ENCODE measurements at regions of chr1 and their contacts with region 1.

Region 1: DNA sequence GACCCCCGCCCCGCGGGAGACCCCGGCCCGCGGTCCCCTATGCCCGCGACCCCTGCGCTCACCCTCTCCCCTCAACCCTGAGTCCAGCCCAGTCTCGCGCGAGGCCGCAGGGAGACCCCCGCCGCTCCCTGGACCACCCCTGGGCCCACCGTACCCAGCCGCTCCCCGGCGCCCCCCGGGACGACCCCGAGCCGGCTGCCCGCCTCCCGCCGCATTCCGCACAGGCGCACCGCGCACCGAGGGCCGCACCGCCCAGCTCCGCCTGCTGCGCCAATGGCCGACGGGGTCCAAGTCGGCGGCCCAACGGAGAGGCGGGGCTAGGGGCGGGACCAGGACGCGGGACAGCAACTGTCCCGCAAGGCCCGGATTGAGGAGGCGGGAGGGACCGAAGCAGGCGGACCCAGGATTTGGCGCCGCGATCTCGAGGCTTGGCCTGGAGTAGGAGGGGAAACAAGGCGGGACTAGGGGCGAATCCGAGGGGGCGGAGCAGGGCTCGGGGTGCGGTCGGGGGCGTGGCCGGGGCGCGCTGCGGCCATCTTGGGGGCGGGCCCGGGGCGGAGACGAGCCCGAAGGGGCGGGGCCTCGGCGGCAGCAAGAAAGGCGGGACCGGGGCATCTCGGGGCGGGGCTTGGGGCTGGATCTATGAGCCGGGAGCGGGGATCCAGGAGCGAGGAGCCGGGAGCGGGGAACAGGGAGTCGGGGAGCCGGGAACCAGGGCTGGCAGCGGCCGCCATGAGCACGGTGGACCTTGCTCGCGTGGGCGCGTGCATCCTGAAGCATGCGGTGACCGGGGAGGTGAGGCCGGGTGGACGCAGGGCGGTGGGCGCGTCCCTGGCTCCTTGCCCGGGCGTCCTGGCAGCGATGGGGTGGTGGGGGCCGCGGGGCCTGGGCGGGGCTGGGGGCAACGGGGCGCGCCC is at the start of gene PRXL2B:
- DNase-seq: peak; percentile 94 to 99 (median 97)
- ATAC-seq: peak; percentile 69
- H3K4me3 ChIP-seq: peak within 1 kb of the TSS; percentile 79 to 95
- H3K4me3 Mint-ChIP-seq: peak within 1 kb of the TSS; percentile 93
- H3K27ac ChIP-seq: peak within 1 kb of the TSS; percentile 95 to 98
- H3K27ac Mint-ChIP-seq: peak within 1 kb of the TSS; percentile 99
- H3K4me1 ChIP-seq: peaks cover 37% of the 10 kb centered on the region
- H3K4me1 Mint-ChIP-seq: peaks cover 40% of the 10 kb centered on the region
- H3K27me3 ChIP-seq: no peaks in the 10 kb centered on the region
- H3K27me3 Mint-ChIP-seq: no peaks in the 10 kb centered on the region
- CTCF ChIP-seq: no peak
- total RNA-seq, gene PRXL2B: 13.5 to 15.9 TPM

Region 2: DNA sequence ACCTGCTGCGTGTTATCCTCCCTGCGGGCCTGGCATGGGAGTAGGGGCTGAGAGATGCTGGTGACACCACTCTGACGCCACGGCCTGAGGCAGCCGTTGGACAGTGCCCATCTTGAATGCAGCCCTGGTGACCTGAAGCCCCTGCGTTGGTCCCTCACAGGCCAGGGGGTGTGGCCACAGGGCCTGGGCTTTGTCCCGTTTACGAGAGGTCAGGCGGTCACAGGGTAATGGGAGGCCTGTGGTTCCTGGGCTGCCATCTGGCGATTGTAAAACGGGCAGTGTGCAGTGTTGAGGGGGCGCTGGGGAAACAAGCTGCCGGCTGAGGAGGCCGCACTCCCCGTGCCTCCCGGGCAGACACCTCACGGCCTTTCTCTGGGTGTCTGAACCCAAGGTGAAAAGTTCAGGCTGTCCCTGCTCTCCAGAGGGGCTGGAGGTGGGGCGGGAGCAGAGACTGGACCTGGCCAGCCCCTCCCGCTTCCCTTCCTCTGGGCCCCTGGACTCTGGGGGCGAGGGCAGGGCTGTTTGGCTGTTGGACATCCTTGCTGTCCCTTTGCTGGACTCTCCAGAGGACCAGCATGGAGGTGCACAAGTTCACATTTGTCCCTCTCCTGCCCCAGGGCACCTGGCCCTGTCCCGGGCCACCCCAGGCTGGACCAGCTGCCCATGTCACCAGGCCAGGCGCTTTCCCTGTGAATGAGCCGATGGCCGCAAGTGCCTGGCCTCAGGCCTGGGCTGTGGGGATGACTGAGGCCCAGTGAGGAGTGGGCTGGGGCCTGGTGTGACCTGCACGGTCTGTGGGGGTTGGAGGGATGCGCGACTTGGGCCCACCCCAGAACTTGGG is 315.9 kb before region 1 on chr1:
- CTCF ChIA-PET with region 1: no interaction called
- POLR2A ChIA-PET with region 1: no interaction called
- intact Hi-C with region 1: no loop called
- DNase-seq: no peak
- ATAC-seq: no peak
- H3K4me3 ChIP-seq: no peak overlapping the region
- H3K4me3 Mint-ChIP-seq: no peak overlapping the region
- H3K27ac ChIP-seq: no peak overlapping the region
- H3K27ac Mint-ChIP-seq: no peak overlapping the region
- H3K4me1 ChIP-seq: peaks cover 92% of the 10 kb centered on the region
- H3K4me1 Mint-ChIP-seq: peaks cover 65% of the 10 kb centered on the region
- H3K27me3 ChIP-seq: no peaks in the 10 kb centered on the region
- H3K27me3 Mint-ChIP-seq: no peaks in the 10 kb centered on the region
- CTCF ChIP-seq: no peak

Region 3: GRCh38 chr1:2314803-2315673 is 271.4 kb before region 1 on chr1:
- CTCF ChIA-PET with region 1: no interaction called
- POLR2A ChIA-PET with region 1: no interaction called
- intact Hi-C with region 1: loop called in 1 of 2 experiments (anchors 10 kb)
- DNase-seq: peak; percentile 52 to 89 (median 73)
- ATAC-seq: peak; percentile 50
- H3K4me3 ChIP-seq: peak overlapping the region; percentile 52 to 58
- H3K4me3 Mint-ChIP-seq: peak overlapping the region; percentile 64
- H3K27ac ChIP-seq: peak overlapping the region; percentile 70 to 82
- H3K27ac Mint-ChIP-seq: peak overlapping the region; percentile 79
- H3K4me1 ChIP-seq: peaks cover 76% of the 10 kb centered on the region
- H3K4me1 Mint-ChIP-seq: peaks cover 33% of the 10 kb centered on the region
- H3K27me3 ChIP-seq: no peaks in the 10 kb centered on the region
- H3K27me3 Mint-ChIP-seq: no peaks in the 10 kb centered on the region
- CTCF ChIP-seq: peak; percentile 97

Region 4: GRCh38 chr1:2535981-2536380 is 50.4 kb before region 1 on chr1:
- CTCF ChIA-PET with region 1: no interaction called
- POLR2A ChIA-PET with region 1: no interaction called
- intact Hi-C with region 1: no loop called
- DNase-seq: no peak
- ATAC-seq: no peak
- H3K4me3 ChIP-seq: no peak overlapping the region
- H3K4me3 Mint-ChIP-seq: no peak overlapping the region
- H3K27ac ChIP-seq: no peak overlapping the region
- H3K27ac Mint-ChIP-seq: no peak overlapping the region
- H3K4me1 ChIP-seq: peaks cover 10% of the 10 kb centered on the region
- H3K4me1 Mint-ChIP-seq: peaks cover 3% of the 10 kb centered on the region
- H3K27me3 ChIP-seq: peaks cover under 1 to 17% of the 10 kb centered on the region in 2 experiments
- H3K27me3 Mint-ChIP-seq: peaks cover 8% of the 10 kb centered on the region
- CTCF ChIP-seq: no peak

Region 5: GRCh38 chr1:2561898-2562545 is 24.4 kb before region 1 on chr1:
- CTCF ChIA-PET with region 1: interaction called, 28 read pairs
- POLR2A ChIA-PET with region 1: interaction called, 98 read pairs
- intact Hi-C with region 1: no loop called
- DNase-seq: peak in 3 of 9 experiments; percentile 22 to 53 (median 40)
- ATAC-seq: peak; percentile 67
- H3K4me3 ChIP-seq: no peak overlapping the region
- H3K4me3 Mint-ChIP-seq: no peak overlapping the region
- H3K27ac ChIP-seq: no peak overlapping the region
- H3K27ac Mint-ChIP-seq: peak overlapping the region; percentile 45
- H3K4me1 ChIP-seq: peaks cover 21% of the 10 kb centered on the region
- H3K4me1 Mint-ChIP-seq: peaks cover 23% of the 10 kb centered on the region
- H3K27me3 ChIP-seq: no peaks in the 10 kb centered on the region
- H3K27me3 Mint-ChIP-seq: no peaks in the 10 kb centered on the region
- CTCF ChIP-seq: peak; percentile 38

Region 6: DNA sequence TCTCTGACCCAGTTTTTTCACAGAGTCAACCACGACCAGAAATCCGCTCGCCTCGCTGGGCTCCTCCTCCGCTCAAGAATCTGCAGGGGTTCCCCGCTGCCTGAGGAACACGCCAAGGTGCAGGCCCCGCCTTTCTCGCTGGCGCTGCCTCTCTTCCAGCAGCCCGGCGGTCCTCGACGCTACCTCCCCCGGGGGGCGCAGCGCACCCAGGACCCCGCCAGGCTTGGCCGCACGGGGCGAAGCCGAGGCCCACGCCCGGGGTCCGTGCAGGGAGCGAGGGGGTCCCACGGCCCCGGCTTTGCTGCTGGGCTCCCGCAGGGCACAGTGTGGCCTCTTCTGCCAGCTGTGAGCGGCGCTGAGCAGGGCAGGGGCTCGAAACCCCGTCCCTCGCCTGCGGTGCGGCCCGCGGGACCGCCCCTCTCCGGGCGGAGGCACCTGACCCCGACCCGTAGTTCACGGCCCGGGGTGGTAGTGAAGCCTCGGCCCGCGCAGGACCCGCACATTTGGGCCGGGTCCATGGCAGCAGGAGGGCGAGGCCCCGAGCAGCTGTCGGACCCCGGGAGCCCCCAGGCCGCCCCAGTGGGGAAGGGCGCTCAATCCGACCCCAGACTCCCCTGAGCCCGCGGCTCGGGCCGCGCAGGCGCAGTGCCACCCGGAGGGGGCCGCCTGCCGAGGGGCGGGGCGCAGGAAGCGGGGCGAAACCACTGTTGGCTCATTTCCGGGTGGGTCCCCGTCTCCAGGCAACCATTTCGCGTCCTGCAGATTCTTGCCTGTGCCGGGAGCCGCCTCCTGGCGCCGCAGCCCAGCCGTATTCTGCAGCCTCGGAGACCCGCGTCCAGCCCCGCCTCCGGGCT is 56.4 kb after region 1 on chr1:
- CTCF ChIA-PET with region 1: interaction called, 5 read pairs
- POLR2A ChIA-PET with region 1: interaction called, 8 read pairs
- intact Hi-C with region 1: loop called (anchors 1 kb)
- DNase-seq: peak; percentile 88 to 97 (median 96)
- ATAC-seq: peak; percentile 84
- H3K4me3 ChIP-seq: peak overlapping the region; percentile 63 to 95
- H3K4me3 Mint-ChIP-seq: peak overlapping the region; percentile 85
- H3K27ac ChIP-seq: peak overlapping the region; percentile 91 to 93
- H3K27ac Mint-ChIP-seq: peak overlapping the region; percentile 88
- H3K4me1 ChIP-seq: peaks cover 17% of the 10 kb centered on the region
- H3K4me1 Mint-ChIP-seq: peaks cover 13% of the 10 kb centered on the region
- H3K27me3 ChIP-seq: no peaks in the 10 kb centered on the region
- H3K27me3 Mint-ChIP-seq: no peaks in the 10 kb centered on the region
- CTCF ChIP-seq: no peak

Region 7: DNA sequence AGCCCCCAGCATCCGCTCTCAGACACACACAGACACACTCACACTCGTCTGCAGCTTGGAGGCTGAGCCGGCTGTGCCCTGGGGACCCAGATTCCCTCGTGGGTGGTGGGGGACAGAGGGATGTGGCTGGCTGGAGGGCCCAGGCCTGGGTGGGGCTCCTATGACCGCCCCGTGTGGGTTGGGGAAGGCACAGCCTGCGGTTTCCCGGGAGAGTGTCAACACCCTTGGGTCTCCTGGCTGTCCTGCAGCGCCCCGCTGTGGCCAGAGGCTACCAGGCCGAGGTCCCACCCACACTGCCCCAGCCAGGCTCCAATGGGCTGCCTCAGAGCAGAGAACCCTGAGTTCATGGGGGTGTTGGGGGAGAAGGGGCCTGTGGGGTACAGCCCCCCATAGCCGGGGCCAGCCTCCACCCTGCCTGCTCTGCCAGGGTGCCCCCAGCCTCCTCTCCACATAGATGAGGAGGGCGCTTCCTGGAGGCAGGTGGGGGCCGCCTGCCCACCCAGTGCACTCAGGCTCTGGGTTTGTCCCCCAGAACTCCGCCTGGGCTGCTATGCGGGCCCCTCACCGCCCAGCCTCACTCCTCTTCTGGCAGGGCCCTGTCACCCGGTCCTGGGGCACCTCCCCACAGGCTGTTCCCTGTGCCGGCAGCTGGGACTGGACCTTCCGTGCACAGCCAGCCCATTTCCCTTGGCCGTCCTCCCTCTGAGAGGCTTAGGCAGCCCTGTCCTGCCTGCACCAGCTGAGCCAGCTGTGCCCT is 215.3 kb after region 1 on chr1 and contains the start of gene TTC34:
- CTCF ChIA-PET with region 1: no interaction called
- POLR2A ChIA-PET with region 1: no interaction called
- intact Hi-C with region 1: no loop called
- DNase-seq: peak in 8 of 9 experiments; percentile 8 to 65 (median 42)
- ATAC-seq: peak; percentile 52
- H3K4me3 ChIP-seq: no peak within 1 kb of the TSS
- H3K4me3 Mint-ChIP-seq: no peak within 1 kb of the TSS
- H3K27ac ChIP-seq: no peak within 1 kb of the TSS
- H3K27ac Mint-ChIP-seq: no peak within 1 kb of the TSS
- H3K4me1 ChIP-seq: peaks cover 6% of the 10 kb centered on the region
- H3K4me1 Mint-ChIP-seq: peaks cover 3% of the 10 kb centered on the region
- H3K27me3 ChIP-seq: peaks cover 0 to 3% of the 10 kb centered on the region in 2 experiments
- H3K27me3 Mint-ChIP-seq: peaks cover 15% of the 10 kb centered on the region
- CTCF ChIP-seq: no peak
- total RNA-seq, gene TTC34: 0.75 to 0.76 TPM